CD8-positive, alpha-beta T cell (primary cell): ENCODE measurements at regions of chr11 and their contacts with region 1.

Region 1: GRCh38 chr11:9384535-9385303 is at the start of gene IPO7:
- DNase-seq: peak; percentile 73 to 92 (median 87)
- ATAC-seq: peak; percentile 98
- H3K4me3 ChIP-seq: peak within 1 kb of the TSS; percentile 79 to 83
- H3K4me3 Mint-ChIP-seq: peak within 1 kb of the TSS; percentile 96
- H3K27ac ChIP-seq: peak within 1 kb of the TSS; percentile 77 to 84
- H3K27ac Mint-ChIP-seq: peak within 1 kb of the TSS; percentile 92
- H3K4me1 ChIP-seq: peaks cover 12% of the 10 kb centered on the region
- H3K4me1 Mint-ChIP-seq: peaks cover 33% of the 10 kb centered on the region
- H3K27me3 ChIP-seq: no peaks in the 10 kb centered on the region
- H3K27me3 Mint-ChIP-seq: no peaks in the 10 kb centered on the region
- CTCF ChIP-seq: no peak
- total RNA-seq, gene IPO7: 52.4 to 53.4 TPM

Region 2: DNA sequence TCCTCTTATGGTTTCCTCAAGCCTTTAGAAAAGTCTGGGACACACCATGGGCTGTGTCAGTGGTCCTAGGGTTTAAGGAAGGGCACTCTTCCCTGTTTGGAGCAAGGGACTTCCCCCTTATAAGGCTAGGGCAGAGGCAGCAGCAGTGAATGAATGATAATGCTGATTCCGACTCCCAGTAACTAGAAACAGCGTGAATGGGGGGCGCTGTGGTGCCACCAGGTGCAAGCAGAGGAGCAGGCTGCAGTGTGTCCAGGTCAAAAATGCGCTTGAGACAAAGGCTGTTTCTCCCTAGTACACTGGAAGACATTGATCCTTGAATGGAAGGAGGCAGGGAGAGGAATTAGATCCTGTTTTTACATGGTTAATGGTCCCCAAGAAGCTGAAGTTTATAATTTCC is 1204.2 kb before region 1 on chr11:
- CTCF ChIA-PET with region 1: no interaction called
- POLR2A ChIA-PET with region 1: no interaction called
- intact Hi-C with region 1: no loop called
- DNase-seq: no peak
- ATAC-seq: no peak
- H3K4me3 ChIP-seq: no peak overlapping the region
- H3K4me3 Mint-ChIP-seq: no peak overlapping the region
- H3K27ac ChIP-seq: no peak overlapping the region
- H3K27ac Mint-ChIP-seq: no peak overlapping the region
- H3K4me1 ChIP-seq: no peaks in the 10 kb centered on the region
- H3K4me1 Mint-ChIP-seq: no peaks in the 10 kb centered on the region
- H3K27me3 ChIP-seq: no peaks in the 10 kb centered on the region
- H3K27me3 Mint-ChIP-seq: peaks cover 7% of the 10 kb centered on the region
- CTCF ChIP-seq: no peak

Region 3: GRCh38 chr11:8682303-8683114 is 702.2 kb before region 1 on chr11 and contains the starts of genes RPL27A and TRIM66:
- CTCF ChIA-PET with region 1: no interaction called
- POLR2A ChIA-PET with region 1: no interaction called
- intact Hi-C with region 1: loop called in 1 of 2 experiments (anchors 1 kb)
- DNase-seq: peak; percentile 98 to 100 (median 99)
- ATAC-seq: peak; percentile 92
- H3K4me3 ChIP-seq: peak within 1 kb of the TSS; percentile 63 to 99
- H3K4me3 Mint-ChIP-seq: peak within 1 kb of the TSS; percentile 96
- H3K27ac ChIP-seq: peak within 1 kb of the TSS; percentile 82 to 92
- H3K27ac Mint-ChIP-seq: peak within 1 kb of the TSS; percentile 98
- H3K4me1 ChIP-seq: peaks cover 27% of the 10 kb centered on the region
- H3K4me1 Mint-ChIP-seq: peaks cover 48% of the 10 kb centered on the region
- H3K27me3 ChIP-seq: no peaks in the 10 kb centered on the region
- H3K27me3 Mint-ChIP-seq: no peaks in the 10 kb centered on the region
- CTCF ChIP-seq: no peak
- total RNA-seq, gene RPL27A: 1,595 to 1,676 TPM
- total RNA-seq, gene TRIM66: 8.6 to 9.1 TPM

Region 4: DNA sequence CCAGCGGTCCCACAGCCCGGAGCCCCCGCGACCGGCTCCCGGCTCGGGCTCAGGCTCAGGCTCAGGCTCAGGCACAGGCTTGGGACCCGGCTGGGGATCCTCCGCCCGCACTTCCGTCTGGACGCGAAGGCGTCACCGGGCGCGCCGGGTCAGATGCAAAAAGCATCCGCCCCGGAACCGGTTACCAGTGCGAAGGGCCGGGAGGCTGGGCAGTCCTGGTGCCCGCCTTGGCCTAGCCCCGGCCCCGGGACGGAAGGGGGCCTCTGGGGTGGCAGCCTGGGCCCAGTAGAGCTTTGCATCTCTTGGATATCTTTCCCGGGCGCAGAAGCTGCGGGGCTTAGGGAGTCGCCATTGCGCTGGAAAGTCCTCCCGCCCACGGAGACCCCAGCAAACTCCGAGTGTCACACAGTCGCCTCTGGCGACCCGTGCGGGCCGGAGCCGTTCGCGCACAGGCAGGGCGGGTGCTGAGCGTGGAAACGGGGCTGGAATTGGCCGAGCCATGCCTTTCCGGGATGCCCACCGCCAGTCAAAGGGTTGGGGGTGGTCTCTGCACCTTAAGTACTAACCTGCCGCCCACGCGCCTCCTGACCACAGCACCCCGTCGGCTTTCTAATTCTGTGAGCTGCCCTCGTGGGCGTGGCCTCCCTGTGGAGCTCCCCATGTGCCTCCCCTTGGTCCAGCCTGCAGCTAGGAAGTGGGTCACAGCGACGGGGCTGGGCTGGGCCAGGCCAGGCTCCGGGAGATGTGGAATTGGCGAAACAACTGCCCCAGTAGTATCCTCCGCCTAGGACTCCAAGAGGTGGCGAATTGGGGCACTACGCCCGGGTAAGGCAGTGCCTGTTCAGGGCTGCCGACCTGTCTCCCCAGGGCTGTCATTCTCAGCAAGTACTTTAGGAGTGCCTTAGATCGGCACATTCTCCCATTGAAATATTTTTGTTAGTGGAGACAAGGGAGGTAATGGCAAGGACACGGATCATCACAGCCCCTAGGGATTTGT is 420.1 kb before region 1 on chr11 and contains the start of gene TMEM9B:
- CTCF ChIA-PET with region 1: no interaction called
- POLR2A ChIA-PET with region 1: no interaction called
- intact Hi-C with region 1: loop called in 1 of 2 experiments (anchors 1 kb)
- DNase-seq: peak; percentile 48 to 89 (median 75)
- ATAC-seq: peak; percentile 72
- H3K4me3 ChIP-seq: peak within 1 kb of the TSS; percentile 93 to 98
- H3K4me3 Mint-ChIP-seq: peak within 1 kb of the TSS; percentile 98
- H3K27ac ChIP-seq: peak within 1 kb of the TSS; percentile 94 to 99
- H3K27ac Mint-ChIP-seq: peak within 1 kb of the TSS; percentile 98
- H3K4me1 ChIP-seq: peaks cover 24% of the 10 kb centered on the region
- H3K4me1 Mint-ChIP-seq: peaks cover 36% of the 10 kb centered on the region
- H3K27me3 ChIP-seq: no peaks in the 10 kb centered on the region
- H3K27me3 Mint-ChIP-seq: no peaks in the 10 kb centered on the region
- CTCF ChIP-seq: no peak
- total RNA-seq, gene TMEM9B: 27.5 to 28.5 TPM

Region 5: GRCh38 chr11:9203691-9204311 is 180.9 kb before region 1 on chr11:
- CTCF ChIA-PET with region 1: no interaction called
- POLR2A ChIA-PET with region 1: no interaction called
- intact Hi-C with region 1: loop called in 1 of 2 experiments (anchors 1 kb)
- DNase-seq: peak in 6 of 9 experiments; percentile 3 to 62 (median 34)
- ATAC-seq: peak; percentile 70
- H3K4me3 ChIP-seq: no peak overlapping the region
- H3K4me3 Mint-ChIP-seq: no peak overlapping the region
- H3K27ac ChIP-seq: no peak overlapping the region
- H3K27ac Mint-ChIP-seq: no peak overlapping the region
- H3K4me1 ChIP-seq: peaks cover 3% of the 10 kb centered on the region
- H3K4me1 Mint-ChIP-seq: peaks cover 28% of the 10 kb centered on the region
- H3K27me3 ChIP-seq: no peaks in the 10 kb centered on the region
- H3K27me3 Mint-ChIP-seq: no peaks in the 10 kb centered on the region
- CTCF ChIP-seq: no peak

Region 6: DNA sequence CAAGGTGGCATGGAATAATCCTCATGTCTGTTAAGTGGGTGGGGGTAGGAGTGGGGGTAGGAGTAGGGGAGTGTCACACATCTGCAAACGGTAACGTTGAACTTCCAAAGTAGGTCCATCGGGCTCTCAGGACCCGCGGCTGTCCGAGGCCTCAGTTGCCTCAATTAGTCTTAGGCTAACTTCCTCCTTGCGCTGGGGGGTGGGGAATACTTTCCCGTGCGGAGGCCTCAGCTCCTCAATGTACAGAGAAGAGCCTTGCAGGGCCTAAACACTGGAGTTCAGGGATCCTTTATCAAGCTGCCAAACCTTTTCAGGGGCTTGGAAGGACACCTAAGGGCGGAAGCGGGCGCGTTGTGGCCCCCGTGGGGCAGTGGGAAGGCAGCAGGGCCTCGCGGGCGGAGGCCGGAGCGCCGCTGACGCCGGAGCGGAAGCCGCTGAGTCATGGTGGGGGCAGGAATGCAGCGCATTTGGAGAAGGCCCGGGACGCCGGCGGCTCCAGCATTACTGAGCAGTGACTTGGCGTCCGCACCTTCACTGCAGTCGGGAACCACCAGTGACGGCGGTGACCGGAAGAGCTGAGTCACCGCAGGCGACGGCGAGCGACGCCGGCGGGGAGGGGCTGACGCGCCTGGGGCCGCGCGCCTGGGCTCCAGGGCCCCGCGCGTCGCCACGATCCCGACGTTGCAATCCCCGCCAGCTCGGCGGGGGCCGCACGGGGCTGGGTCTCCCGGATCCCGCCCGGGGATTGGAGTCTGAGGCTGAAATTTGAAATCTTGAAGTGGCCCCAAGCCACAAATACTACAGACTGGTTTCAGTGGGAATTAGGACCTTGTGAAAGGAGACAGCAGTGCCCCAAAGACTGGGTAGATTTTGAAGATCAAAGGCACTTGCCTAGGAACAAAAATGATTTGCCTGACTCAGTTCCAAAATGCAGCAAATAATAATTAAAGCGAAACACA is 20.5 kb before region 1 on chr11:
- CTCF ChIA-PET with region 1: interaction called, 6 read pairs
- POLR2A ChIA-PET with region 1: interaction called, 8 read pairs
- intact Hi-C with region 1: loop called in 1 of 2 experiments (anchors 1 kb)
- DNase-seq: peak; percentile 43 to 91 (median 76)
- ATAC-seq: peak; percentile 88
- H3K4me3 ChIP-seq: peak overlapping the region; percentile 60 to 66
- H3K4me3 Mint-ChIP-seq: peak overlapping the region; percentile 87
- H3K27ac ChIP-seq: peak overlapping the region; percentile 61 to 93
- H3K27ac Mint-ChIP-seq: peak overlapping the region; percentile 85
- H3K4me1 ChIP-seq: peaks cover 10% of the 10 kb centered on the region
- H3K4me1 Mint-ChIP-seq: peaks cover 14% of the 10 kb centered on the region
- H3K27me3 ChIP-seq: no peaks in the 10 kb centered on the region
- H3K27me3 Mint-ChIP-seq: no peaks in the 10 kb centered on the region
- CTCF ChIP-seq: no peak